A673 (cell line): ENCODE measurements at regions of chr1 and their contacts with region 1.

Region 1: DNA sequence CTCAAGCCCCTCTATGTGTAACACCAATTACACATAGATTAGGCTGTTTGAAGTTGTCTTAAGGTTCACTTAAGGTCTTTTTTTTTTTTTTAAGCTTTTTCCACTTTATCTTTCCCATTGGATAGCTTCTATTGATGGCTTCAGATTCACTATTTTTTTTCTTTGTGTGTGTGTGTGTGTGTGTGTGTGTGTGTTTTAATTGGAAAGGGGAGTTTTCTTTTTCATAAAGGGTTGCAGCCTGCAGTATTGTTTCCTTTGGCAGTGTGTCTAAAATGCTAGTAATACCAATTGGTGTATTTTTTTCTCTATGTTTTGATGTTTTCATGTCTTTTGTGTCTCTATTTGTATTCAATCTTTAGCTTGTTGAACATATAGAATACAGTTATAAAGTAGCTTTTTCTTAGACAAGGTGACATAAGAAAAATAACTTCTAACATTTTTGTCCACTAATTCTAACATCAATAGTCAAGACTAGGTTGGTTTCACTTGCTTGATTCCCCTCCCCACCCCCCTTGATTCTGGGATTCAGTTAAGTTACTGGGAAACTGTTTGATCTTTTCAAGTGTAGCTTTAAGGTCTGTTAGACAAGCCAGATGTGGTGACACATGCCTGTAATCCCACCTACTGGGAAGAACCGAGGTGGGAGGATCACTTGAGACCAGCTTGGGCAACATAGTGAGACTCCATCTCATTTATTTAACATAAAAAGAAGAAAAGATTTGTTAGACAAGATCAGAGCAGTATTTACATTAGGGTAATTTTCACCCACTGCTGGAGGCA is 21.4 kb downstream of the PRRC2C start:
- DNase-seq: peak; percentile 14
- H3K4me3 ChIP-seq: no peak overlapping the region
- H3K27ac ChIP-seq: peak overlapping the region; percentile 16
- H3K4me1 ChIP-seq: peaks cover 20% of the 10 kb centered on the region
- H3K27me3 ChIP-seq: no peaks in the 10 kb centered on the region
- CTCF ChIP-seq: no peak

Region 2: GRCh38 chr1:171254859-171255605 is 251.7 kb before region 1 on chr1:
- CTCF ChIA-PET with region 1: interaction called, 21 read pairs
- POLR2A ChIA-PET with region 1: no interaction called
- intact Hi-C with region 1: no loop called
- DNase-seq: no peak
- H3K4me3 ChIP-seq: no peak overlapping the region
- H3K27ac ChIP-seq: no peak overlapping the region
- H3K4me1 ChIP-seq: peaks cover 4% of the 10 kb centered on the region
- H3K27me3 ChIP-seq: no peaks in the 10 kb centered on the region
- CTCF ChIP-seq: no peak